ENCODE measurements at regions of chr12 and their contacts with region 1.

Region 1: GRCh38 chr12:48988030-48988649 is 10.0 kb downstream of the WNT1 start:
- DNase-seq: peak; percentile 79
- H3K4me3 Mint-ChIP-seq: no peak overlapping the region
- H3K27ac Mint-ChIP-seq: no peak overlapping the region
- H3K4me1 Mint-ChIP-seq: peaks cover 4% of the 10 kb centered on the region
- H3K27me3 Mint-ChIP-seq: peaks cover 68% of the 10 kb centered on the region

Region 2: GRCh38 chr12:48865434-48866290 is 122.5 kb before region 1 on chr12 and contains the start of gene RND1:
- CTCF ChIA-PET with region 1: interaction called, 11 read pairs
- POLR2A ChIA-PET with region 1: no interaction called
- DNase-seq: peak; percentile 85
- H3K4me3 Mint-ChIP-seq: peak within 1 kb of the TSS; percentile 82
- H3K27ac Mint-ChIP-seq: peak within 1 kb of the TSS; percentile 32
- H3K4me1 Mint-ChIP-seq: peaks cover 28% of the 10 kb centered on the region
- H3K27me3 Mint-ChIP-seq: peaks cover 24% of the 10 kb centered on the region
- total RNA-seq, gene RND1: 2.6 to 3.0 TPM

Region 3: DNA sequence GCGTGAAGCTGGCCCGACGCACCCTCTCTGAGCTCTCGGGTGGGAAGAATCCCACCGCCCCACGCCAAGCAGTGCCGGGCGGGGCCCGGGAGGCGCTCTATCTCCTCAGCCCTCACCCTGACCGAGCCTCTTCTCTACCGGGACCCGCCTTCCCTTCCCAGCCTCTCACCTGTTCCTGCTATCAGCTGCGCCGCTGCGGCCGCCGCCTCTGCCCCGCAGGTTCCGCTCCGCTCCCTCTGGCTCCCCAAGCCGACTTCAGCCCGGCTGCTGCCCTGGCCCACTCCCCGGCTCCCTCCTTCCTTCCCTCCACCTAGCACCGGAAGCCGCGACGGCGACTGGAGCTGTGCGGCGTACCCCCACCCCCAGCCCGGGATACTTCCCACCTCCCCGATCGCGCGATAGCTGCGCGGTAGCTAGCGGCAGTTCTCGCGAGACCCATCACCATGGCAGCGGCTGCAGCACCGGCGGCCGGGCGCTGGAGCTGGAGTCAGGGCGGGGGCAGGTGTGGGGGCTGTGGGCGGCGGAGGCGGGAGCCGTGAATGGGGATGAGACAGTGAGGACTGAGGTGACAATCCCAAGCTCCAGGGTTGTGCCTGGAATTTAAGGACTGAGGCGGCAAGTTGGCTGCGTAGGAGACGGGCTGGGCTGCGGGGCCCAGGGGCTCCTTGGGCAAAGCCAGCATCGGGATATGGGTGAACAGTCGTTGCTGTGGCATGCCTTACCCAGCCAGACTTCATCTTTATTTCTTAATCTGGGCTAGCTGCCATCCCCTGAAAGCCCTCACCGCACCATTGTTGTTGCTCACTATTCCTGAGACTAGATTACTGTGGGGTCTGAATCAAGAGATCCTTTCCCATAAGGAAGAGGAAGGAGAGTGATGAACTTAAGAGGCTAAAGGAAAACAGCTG is 30.7 kb before region 1 on chr12 and contains the start of gene ARF3:
- CTCF ChIA-PET with region 1: interaction called, 25 read pairs
- POLR2A ChIA-PET with region 1: interaction called, 3 read pairs
- DNase-seq: peak; percentile 94
- H3K4me3 Mint-ChIP-seq: peak within 1 kb of the TSS; percentile 95
- H3K27ac Mint-ChIP-seq: peak within 1 kb of the TSS; percentile 64
- H3K4me1 Mint-ChIP-seq: peaks cover 36% of the 10 kb centered on the region
- H3K27me3 Mint-ChIP-seq: peaks cover 12% of the 10 kb centered on the region
- total RNA-seq, gene ARF3: 114 to 122 TPM

Region 4: DNA sequence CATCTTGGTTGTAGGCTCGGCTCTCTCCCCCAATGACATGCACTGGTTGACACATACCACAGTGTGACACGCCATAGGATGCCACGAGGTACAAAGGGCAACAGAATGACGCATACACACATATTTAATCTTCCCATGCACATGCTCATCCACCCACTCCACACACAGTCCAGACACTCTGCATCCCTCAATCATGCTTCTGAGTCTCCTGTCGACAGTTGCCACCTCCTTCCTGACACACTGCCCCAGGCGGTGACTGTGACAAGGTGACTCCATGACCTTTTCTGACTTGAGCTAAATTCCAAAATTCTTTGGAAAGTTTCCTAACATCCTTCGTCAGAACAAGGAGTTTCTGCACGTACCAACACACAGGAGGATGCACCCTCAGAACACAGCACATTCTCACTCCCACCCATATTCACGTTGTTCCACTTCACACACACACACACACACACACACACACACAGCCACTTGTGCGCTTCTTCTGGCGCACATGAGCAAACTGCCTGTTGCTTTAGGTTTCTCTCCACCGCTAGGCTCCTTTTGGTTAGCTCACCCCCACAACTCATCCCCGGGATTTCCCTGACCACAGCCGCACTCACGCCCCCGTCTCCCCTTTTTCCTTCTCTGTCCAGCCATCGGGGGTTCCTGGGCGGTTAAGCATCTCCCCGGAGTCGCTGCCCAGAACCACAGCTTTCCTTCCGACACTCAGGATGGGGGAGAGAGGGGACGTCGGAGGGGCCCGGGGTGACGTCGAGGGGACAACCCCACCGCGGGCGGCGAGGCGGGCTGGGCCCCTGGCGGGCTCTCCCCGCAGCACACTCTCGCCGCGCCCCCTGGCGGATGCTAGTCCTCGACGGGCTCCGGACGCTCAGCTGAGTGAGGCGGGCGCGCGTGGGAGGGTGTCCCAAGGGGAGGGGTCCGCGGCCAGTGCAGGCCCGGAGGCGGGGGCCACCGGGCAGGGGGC is 10.5 kb before region 1 on chr12:
- CTCF ChIA-PET with region 1: interaction called, 51 read pairs
- POLR2A ChIA-PET with region 1: interaction called, 4 read pairs
- DNase-seq: peak; percentile 79
- H3K4me3 Mint-ChIP-seq: peak overlapping the region; percentile 45
- H3K27ac Mint-ChIP-seq: no peak overlapping the region
- H3K4me1 Mint-ChIP-seq: peaks cover 59% of the 10 kb centered on the region
- H3K27me3 Mint-ChIP-seq: peaks cover 91% of the 10 kb centered on the region

Region 5: DNA sequence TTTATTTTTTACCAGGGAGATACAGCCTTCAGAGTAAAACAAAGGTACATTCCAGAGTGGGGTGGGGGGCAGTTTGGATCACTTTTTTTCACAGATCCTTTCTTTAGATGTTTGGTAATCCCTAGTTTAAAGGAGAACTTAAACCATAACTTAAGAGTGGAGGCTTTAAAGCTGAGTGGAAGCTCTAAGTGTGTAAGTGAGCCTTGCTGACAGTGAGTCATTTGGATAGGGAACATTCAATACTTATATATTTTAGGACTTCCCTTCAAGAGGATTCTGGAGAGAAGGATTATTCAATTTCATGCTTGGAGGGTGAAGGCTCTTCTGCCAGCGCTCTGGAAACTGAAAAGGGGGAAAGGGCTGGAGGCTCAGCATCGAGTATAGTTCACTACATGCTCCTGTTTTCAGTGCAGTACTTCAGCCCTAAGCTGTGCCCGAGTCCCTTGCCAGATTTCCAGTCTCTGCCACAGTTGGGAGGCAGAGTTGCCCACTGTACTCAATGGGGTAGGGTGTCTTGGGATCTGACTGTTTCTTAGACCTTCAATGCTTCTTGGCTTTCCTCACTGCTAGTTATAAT is 22.0 kb after region 1 on chr12:
- CTCF ChIA-PET with region 1: interaction called, 40 read pairs
- POLR2A ChIA-PET with region 1: no interaction called
- DNase-seq: no peak
- H3K4me3 Mint-ChIP-seq: no peak overlapping the region
- H3K27ac Mint-ChIP-seq: no peak overlapping the region
- H3K4me1 Mint-ChIP-seq: peaks cover 8% of the 10 kb centered on the region
- H3K27me3 Mint-ChIP-seq: no peaks in the 10 kb centered on the region

Region 6: DNA sequence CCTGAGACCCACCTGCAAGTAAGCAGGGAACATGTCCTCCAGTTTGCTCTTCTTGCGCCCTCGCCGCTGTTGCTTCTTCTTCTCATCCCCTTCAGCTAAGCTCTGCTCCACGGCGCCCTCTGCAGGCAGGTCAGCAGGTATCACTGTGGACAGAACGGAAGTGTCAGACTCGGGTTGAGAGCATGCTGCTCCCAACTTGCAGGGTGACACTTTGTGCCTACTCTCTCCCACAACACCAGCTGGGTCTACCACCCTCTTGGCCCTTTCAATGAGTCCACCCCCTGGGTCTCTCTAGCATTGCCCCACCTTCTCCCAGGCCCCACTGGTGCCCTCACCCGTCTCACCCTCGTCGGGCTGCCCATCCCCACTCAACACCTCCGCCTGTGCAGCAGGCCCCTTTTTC is 55.7 kb after region 1 on chr12:
- CTCF ChIA-PET with region 1: interaction called, 11 read pairs
- POLR2A ChIA-PET with region 1: no interaction called
- DNase-seq: peak; percentile 83
- H3K4me3 Mint-ChIP-seq: no peak overlapping the region
- H3K27ac Mint-ChIP-seq: peak overlapping the region; percentile 51
- H3K4me1 Mint-ChIP-seq: peaks cover 5% of the 10 kb centered on the region
- H3K27me3 Mint-ChIP-seq: no peaks in the 10 kb centered on the region